ENCODE measurements at regions of chr12 and their contacts with region 1.

Region 1: GRCh38 chr12:96516472-96517430 is 27.4 kb downstream of the CFAP54 start:
- DNase-seq: no peak
- H3K4me3 ChIP-seq: no peak overlapping the region
- CTCF ChIP-seq: peak; percentile 39

Region 2: GRCh38 chr12:95918194-95918993 is 598.4 kb before region 1 on chr12:
- CTCF ChIA-PET with region 1: interaction called, 25 read pairs
- POLR2A ChIA-PET with region 1: interaction called, 6 read pairs
- DNase-seq: no peak
- H3K4me3 ChIP-seq: no peak overlapping the region
- CTCF ChIP-seq: peak; percentile 75

Region 3: GRCh38 chr12:96015672-96016071 is 501.1 kb before region 1 on chr12:
- CTCF ChIA-PET with region 1: interaction called, 41 read pairs
- POLR2A ChIA-PET with region 1: no interaction called
- DNase-seq: no peak
- H3K4me3 ChIP-seq: no peak overlapping the region
- CTCF ChIP-seq: peak; percentile 56

Region 4: DNA sequence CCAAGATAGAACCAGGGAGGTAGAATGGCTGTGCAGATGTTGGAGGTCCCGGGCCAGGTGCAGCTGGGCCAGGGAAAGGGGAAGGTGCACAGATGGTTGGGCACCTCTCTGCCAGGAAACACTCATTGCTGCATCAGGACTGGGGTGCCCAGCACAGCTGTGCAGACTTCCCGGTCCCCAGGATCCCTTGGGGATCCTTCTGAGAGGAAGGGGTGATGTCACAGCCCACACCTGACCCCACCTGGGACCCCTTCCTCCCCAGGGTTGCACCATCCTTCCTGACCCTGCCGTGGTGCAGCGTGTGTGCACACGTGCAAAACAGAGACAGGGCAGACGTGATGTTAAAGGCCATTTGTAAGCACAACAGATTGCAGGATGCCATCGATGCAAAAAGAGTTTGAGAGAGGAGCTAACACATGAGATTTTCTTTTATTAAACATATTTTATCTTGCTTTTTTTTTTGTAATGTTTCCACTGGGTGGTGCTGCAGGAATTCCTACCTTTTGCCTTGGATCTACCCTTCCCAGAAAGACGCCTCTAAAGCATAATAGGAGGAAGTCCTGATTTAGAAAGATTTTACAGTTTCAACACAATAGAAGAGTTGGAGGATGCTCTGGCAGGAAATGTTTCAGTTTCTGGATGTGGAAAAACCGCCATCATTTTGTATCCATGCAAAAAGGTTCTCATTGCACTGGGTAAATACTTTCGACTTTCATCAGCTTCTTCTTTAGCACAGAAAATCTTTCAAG is 307.8 kb before region 1 on chr12:
- CTCF ChIA-PET with region 1: interaction called, 41 read pairs
- POLR2A ChIA-PET with region 1: no interaction called
- DNase-seq: no peak
- H3K4me3 ChIP-seq: no peak overlapping the region
- CTCF ChIP-seq: no peak

Region 5: GRCh38 chr12:96399919-96400797 is 116.6 kb before region 1 on chr12 and contains the start of gene CDK17:
- CTCF ChIA-PET with region 1: interaction called, 114 read pairs
- POLR2A ChIA-PET with region 1: no interaction called
- DNase-seq: no peak
- H3K4me3 ChIP-seq: peak within 1 kb of the TSS; percentile 82
- CTCF ChIP-seq: peak; percentile 43

Region 6: GRCh38 chr12:96495841-96496545 is 20.8 kb before region 1 on chr12:
- CTCF ChIA-PET with region 1: interaction called, 27 read pairs
- POLR2A ChIA-PET with region 1: no interaction called
- DNase-seq: no peak
- H3K4me3 ChIP-seq: no peak overlapping the region
- CTCF ChIP-seq: no peak

Measured in AG04449 (cell line).